Activated CD4-positive, alpha-beta memory T cell treated with anti-CD3 and anti-CD28 coated beads for 36 hours (primary cell): ENCODE measurements at regions of chr11 and their contacts with region 1.

Region 1: DNA sequence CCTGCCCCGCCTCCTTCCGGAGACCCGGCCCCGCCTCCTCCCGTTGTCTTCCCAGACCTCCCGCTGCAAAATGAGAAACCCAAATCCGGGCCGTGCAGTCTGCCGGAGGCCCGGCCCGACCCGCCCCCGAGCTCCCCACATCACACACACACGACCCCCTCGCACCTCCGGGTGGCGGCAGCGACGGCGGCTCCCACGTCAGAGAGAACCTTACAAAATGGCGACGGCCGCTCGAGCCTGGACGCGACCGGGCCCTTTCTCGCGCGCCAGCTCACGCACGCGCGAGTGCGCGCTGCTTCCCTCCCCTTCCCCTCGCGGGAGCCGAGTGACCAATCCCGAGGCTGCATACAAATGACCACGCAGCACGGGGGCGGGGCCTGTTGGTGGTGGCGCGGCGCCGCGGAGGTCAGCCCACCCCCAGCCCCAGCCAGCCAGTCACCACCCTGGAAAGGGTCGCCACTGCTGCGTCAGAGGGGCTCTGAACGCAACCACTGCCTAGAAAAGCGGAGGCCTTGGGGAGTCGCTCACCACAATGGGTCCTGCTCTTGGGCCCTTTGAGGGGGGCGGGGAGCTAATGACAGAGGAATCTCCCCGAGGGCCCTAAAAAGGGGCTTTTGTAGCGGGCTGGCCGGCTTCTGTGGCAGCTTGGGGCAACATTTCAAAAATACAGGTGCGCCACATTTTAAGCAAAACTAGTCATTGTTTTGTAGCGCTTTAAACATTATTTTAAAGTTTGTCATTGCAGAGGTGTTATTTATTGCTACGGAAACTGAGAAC is at the start of gene RBM4B:
- DNase-seq: peak; percentile 97
- H3K4me3 Mint-ChIP-seq: peak within 1 kb of the TSS; percentile 93
- H3K27ac Mint-ChIP-seq: peak within 1 kb of the TSS; percentile 96
- H3K4me1 Mint-ChIP-seq: peaks cover 26% of the 10 kb centered on the region
- H3K27me3 Mint-ChIP-seq: no peaks in the 10 kb centered on the region
- total RNA-seq, gene RBM4B: 10.9 to 11.7 TPM

Region 2: DNA sequence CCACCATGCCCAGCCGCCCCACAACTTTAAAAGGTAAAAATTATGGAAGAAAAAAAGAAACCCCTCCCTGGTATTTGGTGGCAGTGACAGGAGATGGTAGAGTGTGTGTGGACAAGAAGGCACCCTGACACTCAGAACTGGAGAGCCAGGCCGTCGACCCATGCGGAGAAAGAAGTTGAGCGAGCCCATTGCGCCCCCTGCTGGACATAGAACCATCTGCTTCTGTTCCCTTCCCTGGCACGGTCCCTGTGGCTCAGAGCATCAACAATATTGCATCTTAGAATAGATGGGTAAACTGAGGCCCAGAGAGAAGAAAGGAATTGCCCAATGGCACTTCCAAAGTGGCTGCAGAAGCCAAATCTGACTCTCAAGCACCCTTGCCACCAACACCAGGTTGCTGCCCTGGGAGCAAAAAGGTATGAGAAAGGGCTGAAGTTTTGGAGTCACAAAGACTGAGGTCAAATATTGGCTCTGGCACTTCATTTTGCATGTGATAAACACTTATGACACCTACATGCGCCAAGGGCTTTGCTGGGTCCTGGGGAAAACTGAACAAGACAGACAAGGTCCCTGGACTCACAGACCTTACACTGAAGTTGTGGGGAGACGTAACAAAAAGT is 247.7 kb before region 1 on chr11:
- CTCF ChIA-PET with region 1: interaction called, 5 read pairs
- POLR2A ChIA-PET with region 1: no interaction called
- intact Hi-C with region 1: loop called (anchors 2 kb)
- DNase-seq: peak; percentile 85
- H3K4me3 Mint-ChIP-seq: no peak overlapping the region
- H3K27ac Mint-ChIP-seq: no peak overlapping the region
- H3K4me1 Mint-ChIP-seq: no peaks in the 10 kb centered on the region
- H3K27me3 Mint-ChIP-seq: no peaks in the 10 kb centered on the region

Region 3: GRCh38 chr11:66510271-66510989 is 167.4 kb before region 1 on chr11 and contains the start of gene BBS1:
- CTCF ChIA-PET with region 1: interaction called, 24 read pairs
- POLR2A ChIA-PET with region 1: no interaction called
- intact Hi-C with region 1: no loop called
- DNase-seq: peak; percentile 87
- H3K4me3 Mint-ChIP-seq: peak within 1 kb of the TSS; percentile 88
- H3K27ac Mint-ChIP-seq: peak within 1 kb of the TSS; percentile 38
- H3K4me1 Mint-ChIP-seq: peaks cover 16% of the 10 kb centered on the region
- H3K27me3 Mint-ChIP-seq: no peaks in the 10 kb centered on the region
- total RNA-seq, gene BBS1: 11.1 to 13.2 TPM

Region 4: DNA sequence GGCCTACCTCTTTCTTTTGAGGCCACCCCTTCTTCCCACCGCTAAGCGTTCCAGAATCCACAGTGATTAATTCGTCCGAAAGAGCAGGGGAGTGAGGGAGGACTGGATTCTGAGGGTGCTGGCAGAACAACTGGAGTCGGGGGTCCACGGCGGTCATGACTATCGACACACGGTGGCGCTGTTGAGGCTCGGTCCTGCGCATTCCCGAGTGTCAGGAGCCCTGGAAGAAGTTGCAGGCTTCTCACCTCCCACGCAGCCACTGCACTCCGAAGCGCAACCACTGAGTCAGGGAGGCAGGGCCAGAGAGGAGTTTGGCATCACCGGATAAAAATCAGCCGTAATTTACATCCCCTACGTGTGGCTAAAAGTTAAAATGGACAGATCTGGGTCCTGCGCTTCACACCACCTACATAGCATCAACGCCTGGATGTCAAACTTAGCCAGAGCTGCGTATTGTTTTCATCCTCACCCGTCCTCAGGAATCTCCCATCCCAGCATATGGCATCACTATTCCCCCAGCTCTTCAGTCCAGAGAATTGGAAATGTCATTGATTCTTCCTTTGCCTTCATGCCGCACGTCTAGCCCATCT is 98.7 kb before region 1 on chr11:
- CTCF ChIA-PET with region 1: interaction called, 141 read pairs
- POLR2A ChIA-PET with region 1: interaction called, 10 read pairs
- intact Hi-C with region 1: loop called (anchors 1 kb)
- DNase-seq: peak; percentile 90
- H3K4me3 Mint-ChIP-seq: no peak overlapping the region
- H3K27ac Mint-ChIP-seq: peak overlapping the region; percentile 40
- H3K4me1 Mint-ChIP-seq: peaks cover 19% of the 10 kb centered on the region
- H3K27me3 Mint-ChIP-seq: no peaks in the 10 kb centered on the region

Region 5: DNA sequence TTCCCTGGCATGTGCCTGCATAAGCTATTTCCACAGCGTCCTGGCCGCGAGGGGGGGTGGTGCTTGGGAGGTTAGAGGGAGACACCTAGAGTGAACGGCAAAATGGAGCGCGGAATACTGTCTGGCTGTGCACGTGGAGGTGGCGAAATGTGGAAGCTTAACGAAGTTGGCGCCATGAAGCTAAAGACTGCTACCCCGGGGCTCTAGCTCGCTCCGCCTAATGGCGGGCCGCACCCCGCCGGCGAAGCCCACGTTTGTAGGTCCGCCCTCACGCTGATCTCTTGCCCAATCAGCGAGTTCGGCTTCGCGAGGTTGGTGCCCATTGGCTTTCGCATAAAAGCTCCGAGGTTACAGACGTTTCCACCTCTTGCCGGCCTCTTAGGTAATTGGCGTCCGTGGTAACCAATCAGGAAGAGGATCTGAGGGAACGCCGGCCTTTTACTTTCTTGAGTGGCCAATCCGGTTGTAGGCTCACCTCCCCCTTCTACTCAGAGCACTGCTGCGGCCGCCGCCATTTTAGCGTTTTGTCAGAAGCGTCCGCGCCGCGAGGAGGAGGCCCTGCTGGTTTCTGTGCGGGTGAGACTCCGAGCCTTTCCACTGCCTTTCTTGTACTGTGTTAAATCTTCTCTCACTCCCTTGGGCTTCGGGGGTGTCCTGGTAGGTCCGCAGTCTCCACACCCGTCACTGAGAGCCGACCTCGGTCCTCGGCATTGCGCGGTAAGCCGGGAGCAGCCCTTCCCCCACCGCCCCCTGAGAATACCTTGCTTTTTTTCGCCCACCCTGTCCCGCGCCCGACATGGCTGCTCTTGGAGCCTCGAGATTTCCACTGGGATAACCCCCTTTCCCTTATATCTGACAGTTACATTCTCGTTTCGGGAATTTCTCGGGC is 39.4 kb before region 1 on chr11 and contains the start of gene RBM4:
- CTCF ChIA-PET with region 1: interaction called, 33 read pairs
- POLR2A ChIA-PET with region 1: interaction called, 36 read pairs
- intact Hi-C with region 1: loop called (anchors 1 kb)
- DNase-seq: peak; percentile 98
- H3K4me3 Mint-ChIP-seq: peak within 1 kb of the TSS; percentile 99
- H3K27ac Mint-ChIP-seq: peak within 1 kb of the TSS; percentile 98
- H3K4me1 Mint-ChIP-seq: peaks cover 63% of the 10 kb centered on the region
- H3K27me3 Mint-ChIP-seq: no peaks in the 10 kb centered on the region
- total RNA-seq, gene RBM4: 87.0 to 94.0 TPM

Region 6: DNA sequence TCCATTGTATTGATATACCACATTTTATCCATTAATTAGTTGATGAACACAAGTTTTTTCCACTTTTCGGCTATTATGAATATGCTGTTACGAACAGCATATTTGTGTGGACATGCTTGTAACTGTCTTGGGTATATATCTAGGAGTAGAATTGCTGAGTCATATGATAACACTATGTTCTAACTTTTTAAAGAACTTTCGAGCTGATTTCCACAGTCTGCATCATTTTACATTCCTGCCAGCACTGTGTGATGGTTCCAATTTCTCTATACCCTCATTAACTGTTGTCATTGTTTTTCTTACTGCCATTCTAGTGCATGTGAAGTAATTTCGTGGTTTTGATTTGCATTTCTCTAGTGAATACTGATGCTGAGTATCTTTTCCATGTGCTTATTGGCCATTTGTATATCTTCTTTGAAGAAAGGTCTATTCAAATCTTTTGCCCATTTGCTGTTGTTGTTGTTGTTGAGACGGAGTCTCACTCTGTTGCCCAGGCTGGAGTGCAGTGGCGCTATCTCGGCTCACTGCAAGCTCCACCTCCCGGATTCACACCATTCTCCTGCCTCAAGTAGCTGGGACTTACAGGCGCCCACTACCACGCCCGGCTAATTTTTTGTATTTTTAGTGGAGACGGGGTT is 158.1 kb after region 1 on chr11:
- CTCF ChIA-PET with region 1: interaction called, 16 read pairs
- POLR2A ChIA-PET with region 1: no interaction called
- intact Hi-C with region 1: no loop called
- DNase-seq: no peak
- H3K4me3 Mint-ChIP-seq: no peak overlapping the region
- H3K27ac Mint-ChIP-seq: no peak overlapping the region
- H3K4me1 Mint-ChIP-seq: peaks cover 22% of the 10 kb centered on the region
- H3K27me3 Mint-ChIP-seq: no peaks in the 10 kb centered on the region